Right lobe of liver (tissue), 6 donors: ENCODE measurements at regions of chr3 and their contacts with region 1.

Region 1: DNA sequence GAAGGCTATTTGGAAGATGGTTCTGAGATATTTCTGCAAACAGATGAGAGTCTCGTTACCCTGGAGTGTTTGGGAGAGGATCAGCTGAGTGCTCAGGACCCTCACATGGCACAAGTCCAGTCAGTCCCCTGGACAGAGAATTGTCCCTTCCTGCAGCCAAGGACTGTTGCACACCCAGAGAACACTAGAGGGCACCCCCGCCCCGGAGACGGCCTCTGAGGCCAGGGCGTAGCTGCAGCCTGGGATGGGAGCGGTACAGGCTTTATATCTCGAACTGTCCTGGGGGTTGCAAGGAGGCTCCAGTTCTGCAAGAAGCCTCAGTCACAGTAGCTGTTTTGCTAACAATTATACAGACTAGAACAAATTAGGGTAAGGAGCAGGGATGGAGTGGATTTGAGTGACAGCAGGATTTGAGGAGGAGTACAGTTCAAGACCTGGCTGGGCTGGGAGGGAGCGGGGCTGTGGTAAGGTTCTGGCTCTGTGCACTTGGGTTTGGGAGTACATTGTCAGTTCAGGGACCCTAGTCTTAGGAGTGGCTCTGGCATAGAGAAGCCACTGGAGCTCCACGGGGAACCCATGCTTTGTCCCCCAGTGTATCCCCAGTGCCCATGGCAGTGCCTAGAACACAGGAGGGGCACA is 67.6 kb upstream of the HACD2 start:
- DNase-seq: peak; percentile 73 to 77 (median 74)
- ATAC-seq: peak; percentile 72 to 85 (median 75)
- H3K4me3 ChIP-seq: no peak overlapping the region
- H3K27ac ChIP-seq: peak overlapping the region; percentile 28 to 65 (median 53)
- H3K4me1 ChIP-seq: peaks cover 0 to 25% (median 9%) of the 10 kb centered on the region in 4 donors
- H3K27me3 ChIP-seq: no peaks in the 10 kb centered on the region
- CTCF ChIP-seq: peak; percentile 68 to 91 (median 81)
- POLR2A ChIP-seq: no peak

Region 2: DNA sequence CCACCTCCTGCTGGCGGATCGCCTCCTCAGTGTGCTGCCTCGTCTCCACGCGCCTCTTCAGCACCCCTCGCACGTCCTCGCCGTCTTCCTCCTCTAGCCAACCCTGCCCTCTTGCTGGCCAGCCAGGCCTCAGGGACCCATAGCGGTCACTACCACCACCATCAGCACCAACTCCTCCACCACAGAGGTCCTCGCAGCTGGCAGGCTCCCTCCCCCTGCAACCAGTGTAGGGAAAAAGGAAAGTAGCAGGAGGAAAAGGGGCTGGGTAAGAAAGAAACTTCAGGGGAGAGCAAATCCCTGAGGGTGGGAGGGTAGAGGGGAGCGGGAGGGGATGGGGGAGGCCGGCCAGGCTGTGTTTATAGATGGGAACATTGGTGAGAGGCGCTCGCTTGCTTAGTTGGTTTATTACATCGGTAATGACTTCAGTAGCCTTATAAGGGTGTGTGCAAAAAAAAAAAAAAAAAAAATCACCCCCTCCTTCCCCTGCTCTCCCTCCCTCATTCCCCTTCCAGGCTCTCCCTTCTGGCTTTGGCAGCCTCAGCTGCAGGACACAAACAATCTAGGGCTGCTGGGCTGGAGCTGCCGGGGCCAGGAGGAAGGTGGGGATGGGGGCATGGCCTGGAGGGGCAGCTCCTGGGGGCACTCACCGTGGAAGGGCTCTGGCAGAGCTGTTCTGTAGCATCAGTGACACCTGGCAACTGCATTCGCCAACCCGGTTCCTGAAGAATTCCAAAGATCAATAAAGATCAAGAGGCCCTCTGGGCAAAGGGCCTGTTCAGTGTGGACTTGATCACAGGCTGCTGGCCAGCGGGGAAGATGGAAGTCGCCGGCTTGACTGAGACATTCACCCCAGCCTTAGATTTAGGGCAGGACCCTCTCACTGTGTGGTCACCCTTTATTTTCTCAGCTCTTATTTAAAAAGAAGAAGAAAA is 48.6 kb after region 1 on chr3:
- intact Hi-C with region 1: loop called (anchors 5 to 10 kb)
- DNase-seq: peak in 1 of 3 donors; percentile 67
- ATAC-seq: peak; percentile 5 to 57 (median 15)
- H3K4me3 ChIP-seq: peak overlapping the region in 2 of 3 donors; percentile 28 to 33
- H3K27ac ChIP-seq: peak overlapping the region; percentile 15 to 40 (median 38)
- H3K4me1 ChIP-seq: peaks cover 0 to 20% (median 9%) of the 10 kb centered on the region in 4 donors
- H3K27me3 ChIP-seq: no peaks in the 10 kb centered on the region
- CTCF ChIP-seq: no peak
- POLR2A ChIP-seq: no peak

Region 3: DNA sequence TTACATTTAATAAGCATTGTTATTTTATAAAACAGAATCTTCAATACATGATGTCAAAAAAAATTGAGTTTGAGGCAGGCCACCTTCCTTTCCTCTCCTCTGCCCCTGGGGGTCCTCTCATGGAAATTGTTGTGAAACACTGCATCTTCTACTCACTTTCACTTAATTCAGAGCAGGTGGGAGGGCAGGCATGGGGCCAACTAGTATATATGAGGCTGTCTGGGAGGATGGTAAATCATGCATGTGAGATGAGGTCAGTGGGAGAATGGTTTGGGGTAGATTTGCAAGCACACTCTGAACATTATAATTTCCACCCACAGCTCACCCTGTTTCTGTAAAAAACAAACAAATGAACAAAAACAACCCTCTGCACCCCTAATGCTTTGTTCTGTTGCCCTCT is 318.9 kb after region 1 on chr3:
- intact Hi-C with region 1: no loop called
- DNase-seq: no peak
- ATAC-seq: no peak
- H3K4me3 ChIP-seq: no peak overlapping the region
- H3K27ac ChIP-seq: no peak overlapping the region
- H3K4me1 ChIP-seq: no peaks in the 10 kb centered on the region
- H3K27me3 ChIP-seq: no peaks in the 10 kb centered on the region
- CTCF ChIP-seq: no peak
- POLR2A ChIP-seq: no peak